ENCODE measurements at regions of chr2 and their contacts with region 1.

Region 1: DNA sequence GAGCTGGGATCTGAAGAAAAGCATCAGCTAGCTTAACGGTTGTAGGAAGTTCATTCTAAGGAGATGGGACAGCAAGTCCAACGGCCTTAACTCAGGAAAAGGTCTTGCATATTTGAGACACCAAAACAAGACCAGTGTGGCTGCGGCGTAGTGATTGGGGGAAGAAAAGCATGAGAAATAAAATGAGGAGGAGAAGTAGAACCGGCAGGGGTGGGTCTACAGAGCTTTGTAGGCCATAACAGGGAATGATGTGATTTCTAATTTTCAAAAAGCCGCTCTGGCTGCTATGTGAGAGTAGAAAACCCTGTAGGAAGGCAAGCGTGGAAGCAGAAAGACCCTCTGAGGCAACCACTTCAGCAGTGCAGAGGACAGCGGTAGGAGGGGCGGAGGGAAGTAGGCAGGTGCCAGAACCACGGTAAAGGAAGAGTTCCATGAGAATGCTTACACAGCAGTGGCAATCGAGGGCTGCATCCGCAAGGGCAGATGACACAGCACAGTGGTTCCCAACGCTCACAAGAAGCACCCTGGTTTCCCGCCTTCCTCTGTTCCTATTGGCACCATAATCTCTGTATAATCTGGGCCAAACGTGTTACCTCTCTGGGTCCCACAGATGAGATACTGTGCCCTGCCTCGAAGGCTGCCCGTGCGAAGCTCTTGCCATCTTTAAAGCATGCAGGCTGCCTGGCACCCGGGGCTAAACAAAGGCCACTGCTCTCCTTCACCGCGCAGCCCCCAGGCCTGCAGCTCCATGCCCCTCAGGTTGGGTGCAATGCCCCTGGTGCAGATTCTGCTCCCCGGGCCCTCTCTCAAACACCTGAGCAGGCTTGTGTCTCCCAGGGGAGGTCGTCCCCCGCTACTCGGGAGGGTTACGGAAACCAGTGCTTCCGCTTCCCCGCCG is 791 bp downstream of the ANKRD39 start:
- DNase-seq: peak; percentile 56
- H3K4me3 Mint-ChIP-seq: peak overlapping the region; percentile 84
- H3K27ac Mint-ChIP-seq: peak overlapping the region; percentile 88
- H3K4me1 Mint-ChIP-seq: peaks cover 43% of the 10 kb centered on the region
- H3K27me3 Mint-ChIP-seq: no peaks in the 10 kb centered on the region

Region 2: GRCh38 chr2:96816128-96816835 is 40.7 kb before region 1 on chr2 and contains the start of gene CNNM3:
- CTCF ChIA-PET with region 1: interaction called, 13 read pairs
- POLR2A ChIA-PET with region 1: no interaction called
- DNase-seq: peak; percentile 95
- H3K4me3 Mint-ChIP-seq: peak within 1 kb of the TSS; percentile 85
- H3K27ac Mint-ChIP-seq: peak within 1 kb of the TSS; percentile 78
- H3K4me1 Mint-ChIP-seq: peaks cover 49% of the 10 kb centered on the region
- H3K27me3 Mint-ChIP-seq: no peaks in the 10 kb centered on the region
- total RNA-seq, gene CNNM3: 31.4 to 41.5 TPM

Region 3: DNA sequence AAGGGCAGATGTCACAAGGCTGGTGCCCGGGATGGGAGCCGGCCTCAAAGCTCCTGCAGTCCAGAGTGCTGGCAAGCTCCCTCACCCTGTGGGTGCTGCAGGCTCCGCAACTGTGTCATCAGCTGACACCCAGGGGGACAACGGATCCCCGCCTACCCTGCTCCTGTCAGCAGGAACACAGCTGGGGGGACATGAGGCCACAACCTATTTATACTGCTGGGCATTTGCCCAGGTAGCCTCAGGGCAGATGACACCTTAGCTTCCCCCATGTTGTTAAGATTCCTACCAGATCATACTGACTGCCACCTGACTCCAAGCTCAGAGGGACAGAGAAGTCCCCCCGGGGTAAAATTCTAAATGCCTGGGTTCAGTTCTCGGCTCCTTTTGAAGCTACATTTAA is 14.4 kb before region 1 on chr2:
- CTCF ChIA-PET with region 1: interaction called, 20 read pairs
- POLR2A ChIA-PET with region 1: no interaction called
- DNase-seq: no peak
- H3K4me3 Mint-ChIP-seq: no peak overlapping the region
- H3K27ac Mint-ChIP-seq: no peak overlapping the region
- H3K4me1 Mint-ChIP-seq: peaks cover 30% of the 10 kb centered on the region
- H3K27me3 Mint-ChIP-seq: no peaks in the 10 kb centered on the region

Region 4: DNA sequence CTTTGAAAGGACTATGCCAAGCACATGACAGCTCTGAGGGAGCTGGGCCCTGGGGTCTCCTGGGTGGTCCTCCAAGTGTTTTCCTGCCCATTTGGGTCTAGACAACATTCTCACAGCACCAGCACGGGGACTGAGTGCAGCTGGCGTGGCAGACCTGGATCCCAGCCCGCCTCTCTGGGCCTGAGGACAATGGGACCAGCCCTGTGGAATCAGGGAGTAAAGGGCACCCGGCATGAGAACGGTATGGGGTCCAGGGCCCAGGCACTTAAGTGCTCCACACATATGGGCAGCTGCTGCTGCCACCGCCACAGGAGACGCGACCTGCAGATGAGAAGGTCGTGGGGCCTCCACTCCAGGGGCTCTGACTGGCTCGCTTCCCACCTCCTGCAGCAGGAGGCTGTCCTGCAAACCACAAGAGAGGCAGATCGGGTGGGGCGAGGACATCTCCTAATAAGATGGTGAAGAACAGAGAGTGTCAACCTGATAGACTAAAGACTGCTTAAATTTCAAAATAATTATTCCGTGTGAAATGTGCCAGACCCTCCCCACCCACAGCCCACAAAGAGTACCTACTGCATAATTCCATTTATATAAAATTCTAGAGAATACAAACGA is 83.1 kb after region 1 on chr2:
- CTCF ChIA-PET with region 1: interaction called, 20 read pairs
- POLR2A ChIA-PET with region 1: no interaction called
- DNase-seq: no peak
- H3K4me3 Mint-ChIP-seq: no peak overlapping the region
- H3K27ac Mint-ChIP-seq: peak overlapping the region; percentile 71
- H3K4me1 Mint-ChIP-seq: peaks cover 47% of the 10 kb centered on the region
- H3K27me3 Mint-ChIP-seq: peaks cover 4% of the 10 kb centered on the region

Region 5: GRCh38 chr2:96951093-96951654 is 94.1 kb after region 1 on chr2:
- CTCF ChIA-PET with region 1: interaction called, 36 read pairs
- POLR2A ChIA-PET with region 1: interaction called, 4 read pairs
- DNase-seq: peak; percentile 84
- H3K4me3 Mint-ChIP-seq: no peak overlapping the region
- H3K27ac Mint-ChIP-seq: peak overlapping the region; percentile 32
- H3K4me1 Mint-ChIP-seq: peaks cover 38% of the 10 kb centered on the region
- H3K27me3 Mint-ChIP-seq: no peaks in the 10 kb centered on the region

Region 6: GRCh38 chr2:96970248-96970875 is 113.3 kb after region 1 on chr2:
- CTCF ChIA-PET with region 1: interaction called, 22 read pairs
- POLR2A ChIA-PET with region 1: no interaction called
- DNase-seq: no peak
- H3K4me3 Mint-ChIP-seq: no peak overlapping the region
- H3K27ac Mint-ChIP-seq: peak overlapping the region; percentile 42
- H3K4me1 Mint-ChIP-seq: peaks cover 71% of the 10 kb centered on the region
- H3K27me3 Mint-ChIP-seq: no peaks in the 10 kb centered on the region

Region 7: GRCh38 chr2:96984300-96984699 is 127.3 kb after region 1 on chr2:
- CTCF ChIA-PET with region 1: no interaction called
- POLR2A ChIA-PET with region 1: no interaction called
- DNase-seq: no peak
- H3K4me3 Mint-ChIP-seq: no peak overlapping the region
- H3K27ac Mint-ChIP-seq: no peak overlapping the region
- H3K4me1 Mint-ChIP-seq: no peaks in the 10 kb centered on the region
- H3K27me3 Mint-ChIP-seq: peaks cover 3% of the 10 kb centered on the region